Activated CD4-positive, alpha-beta memory T cell treated with anti-CD3 and anti-CD28 coated beads, Interleukin-2, amount 10 ng/mL, durations not matched to agents 7 days and 5 days (primary cell): ENCODE measurements at regions of chr11 and their contacts with region 1.

Region 1: GRCh38 chr11:102287964-102288724 is 29.1 kb upstream of the BIRC3 start:
- DNase-seq: no peak
- H3K4me3 Mint-ChIP-seq: no peak overlapping the region
- H3K27ac Mint-ChIP-seq: no peak overlapping the region
- H3K4me1 Mint-ChIP-seq: peaks cover 17% of the 10 kb centered on the region
- H3K27me3 Mint-ChIP-seq: no peaks in the 10 kb centered on the region

Region 2: DNA sequence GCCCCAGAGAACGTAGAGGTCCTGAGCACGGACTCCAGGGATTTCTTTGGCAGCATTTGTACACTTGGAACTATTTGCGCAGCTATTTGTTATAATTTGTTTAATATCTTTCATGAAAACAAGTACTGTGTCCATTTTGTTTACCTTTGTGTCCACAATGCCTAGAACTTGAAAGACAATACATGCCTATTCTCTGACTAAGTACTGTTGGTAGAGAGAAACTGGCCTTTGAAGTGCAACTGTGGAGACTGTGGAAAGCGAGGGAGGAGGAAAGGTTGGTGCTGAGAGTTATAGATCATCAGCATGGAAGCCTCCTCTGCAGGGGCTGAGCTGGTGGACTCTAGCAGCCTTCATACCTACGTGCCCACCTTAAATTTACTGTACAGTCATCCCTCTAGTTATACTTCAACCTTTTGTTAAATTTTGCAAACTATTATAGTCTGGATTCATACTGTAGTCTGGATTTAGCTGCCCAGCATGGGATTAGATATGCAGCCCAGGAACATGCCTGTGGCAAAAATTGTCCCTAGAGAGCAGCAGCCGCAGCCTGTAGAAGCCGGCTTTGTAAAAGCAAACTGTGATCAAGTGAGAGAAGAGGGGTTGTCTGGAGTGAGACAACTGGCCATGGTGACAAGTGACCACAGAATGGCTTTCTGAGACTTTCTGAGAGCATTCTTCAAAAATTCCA is 202.1 kb before region 1 on chr11:
- CTCF ChIA-PET with region 1: no interaction called
- POLR2A ChIA-PET with region 1: no interaction called
- DNase-seq: no peak
- H3K4me3 Mint-ChIP-seq: no peak overlapping the region
- H3K27ac Mint-ChIP-seq: no peak overlapping the region
- H3K4me1 Mint-ChIP-seq: no peaks in the 10 kb centered on the region
- H3K27me3 Mint-ChIP-seq: peaks cover 4% of the 10 kb centered on the region

Region 3: GRCh38 chr11:102177974-102178631 is 110.0 kb before region 1 on chr11:
- CTCF ChIA-PET with region 1: no interaction called
- POLR2A ChIA-PET with region 1: no interaction called
- DNase-seq: no peak
- H3K4me3 Mint-ChIP-seq: no peak overlapping the region
- H3K27ac Mint-ChIP-seq: no peak overlapping the region
- H3K4me1 Mint-ChIP-seq: no peaks in the 10 kb centered on the region
- H3K27me3 Mint-ChIP-seq: no peaks in the 10 kb centered on the region

Region 4: DNA sequence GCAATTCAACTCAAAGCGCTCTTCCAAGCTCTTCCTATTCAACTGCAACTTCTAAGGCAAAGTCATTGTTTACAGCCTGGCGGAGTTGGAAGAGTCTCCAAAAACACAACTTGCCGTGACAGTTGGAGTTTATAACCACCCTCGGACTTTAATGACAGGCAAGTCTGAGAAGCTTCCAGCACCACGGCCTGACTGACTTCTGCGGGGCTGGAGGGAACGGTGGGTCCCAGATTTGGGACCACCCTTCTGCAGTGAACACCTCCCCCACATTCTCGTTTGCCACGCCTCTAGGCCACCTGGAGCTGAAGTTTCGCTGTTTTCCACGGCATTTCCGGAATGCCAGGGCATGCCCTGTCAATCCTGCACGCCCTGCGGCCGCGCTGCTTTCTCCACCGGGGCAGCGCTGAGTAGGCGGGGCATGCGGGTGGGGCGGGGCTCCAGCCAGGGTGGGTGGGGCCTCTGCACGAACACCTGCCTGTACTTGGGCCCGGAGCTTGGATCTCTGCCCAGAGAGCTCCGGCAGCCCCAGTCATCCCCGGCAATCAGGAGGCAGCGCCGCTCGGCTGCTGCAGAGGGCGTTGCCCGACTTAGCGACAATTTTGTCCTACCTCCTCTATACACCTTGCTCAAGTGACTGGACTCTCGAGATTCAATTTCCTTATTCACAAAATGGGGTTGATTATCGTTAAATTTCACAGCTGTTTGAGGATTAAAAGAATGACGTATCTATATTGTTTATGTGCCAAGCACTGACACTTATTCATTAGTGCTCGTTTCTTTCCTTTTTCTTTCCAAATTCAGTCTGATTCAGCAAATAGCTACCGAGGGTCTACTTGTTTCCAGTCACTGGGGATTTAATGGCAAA is 19.6 kb before region 1 on chr11:
- CTCF ChIA-PET with region 1: interaction called, 13 read pairs
- POLR2A ChIA-PET with region 1: no interaction called
- DNase-seq: peak; percentile 74
- H3K4me3 Mint-ChIP-seq: peak overlapping the region; percentile 58
- H3K27ac Mint-ChIP-seq: no peak overlapping the region
- H3K4me1 Mint-ChIP-seq: peaks cover 23% of the 10 kb centered on the region
- H3K27me3 Mint-ChIP-seq: peaks cover 42% of the 10 kb centered on the region

Region 5: DNA sequence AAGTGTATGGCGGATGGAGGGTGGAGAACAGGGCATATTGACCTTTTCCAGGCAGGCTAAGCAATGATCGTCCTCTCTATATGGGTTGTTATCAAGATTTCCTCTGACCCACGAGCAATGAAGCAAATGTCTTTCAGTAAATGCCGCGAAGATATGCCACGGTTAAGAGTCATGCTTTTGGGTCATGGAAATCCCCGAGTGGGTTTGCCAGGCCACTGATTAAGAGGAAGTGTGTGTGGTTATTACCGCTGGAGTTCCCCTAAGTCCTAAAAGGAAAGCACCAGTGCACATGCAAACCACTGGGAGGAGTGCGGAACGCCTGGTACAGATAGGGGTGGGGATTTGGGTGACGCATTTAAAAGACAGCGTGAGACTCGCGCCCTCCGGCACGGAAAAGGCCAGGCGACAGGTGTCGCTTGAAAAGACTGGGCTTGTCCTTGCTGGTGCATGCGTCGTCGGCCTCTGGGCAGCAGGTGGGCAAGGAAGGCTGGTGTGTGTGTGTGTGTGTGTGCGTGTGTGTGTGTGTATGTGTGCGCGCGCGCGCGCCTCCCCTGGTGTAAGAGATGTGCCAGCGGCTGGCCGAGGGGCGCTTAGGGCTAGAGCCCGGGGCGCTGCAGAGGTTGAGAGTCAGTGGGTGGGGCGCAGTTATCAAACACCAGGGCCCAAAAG is 29.1 kb after region 1 on chr11 and contains the start of gene BIRC3:
- CTCF ChIA-PET with region 1: interaction called, 158 read pairs
- POLR2A ChIA-PET with region 1: interaction called, 26 read pairs
- DNase-seq: peak; percentile 92
- H3K4me3 Mint-ChIP-seq: peak within 1 kb of the TSS; percentile 94
- H3K27ac Mint-ChIP-seq: peak within 1 kb of the TSS; percentile 91
- H3K4me1 Mint-ChIP-seq: peaks cover 69% of the 10 kb centered on the region
- H3K27me3 Mint-ChIP-seq: no peaks in the 10 kb centered on the region
- total RNA-seq, gene BIRC3: 79.0 to 80.0 TPM

Region 6: GRCh38 chr11:102367364-102367763 is 79.2 kb after region 1 on chr11:
- CTCF ChIA-PET with region 1: interaction called, 10 read pairs
- POLR2A ChIA-PET with region 1: no interaction called
- DNase-seq: no peak
- H3K4me3 Mint-ChIP-seq: no peak overlapping the region
- H3K27ac Mint-ChIP-seq: no peak overlapping the region
- H3K4me1 Mint-ChIP-seq: peaks cover 25% of the 10 kb centered on the region
- H3K27me3 Mint-ChIP-seq: no peaks in the 10 kb centered on the region

Region 7: GRCh38 chr11:102495161-102496042 is 207.3 kb after region 1 on chr11:
- CTCF ChIA-PET with region 1: interaction called, 11 read pairs
- POLR2A ChIA-PET with region 1: no interaction called
- DNase-seq: peak; percentile 24
- H3K4me3 Mint-ChIP-seq: no peak overlapping the region
- H3K27ac Mint-ChIP-seq: no peak overlapping the region
- H3K4me1 Mint-ChIP-seq: peaks cover 7% of the 10 kb centered on the region
- H3K27me3 Mint-ChIP-seq: peaks cover 24% of the 10 kb centered on the region

Region 8: GRCh38 chr11:102666331-102666957 is 378.3 kb after region 1 on chr11:
- CTCF ChIA-PET with region 1: interaction called, 28 read pairs
- POLR2A ChIA-PET with region 1: no interaction called
- DNase-seq: no peak
- H3K4me3 Mint-ChIP-seq: no peak overlapping the region
- H3K27ac Mint-ChIP-seq: no peak overlapping the region
- H3K4me1 Mint-ChIP-seq: no peaks in the 10 kb centered on the region
- H3K27me3 Mint-ChIP-seq: peaks cover 5% of the 10 kb centered on the region